ENCODE measurements at regions of chr7 and their contacts with region 1.

Region 1: GRCh38 chr7:140656548-140657515 is 15.9 kb upstream of the ADCK2 start:
- DNase-seq: peak in 1 of 2 donors; percentile 76
- H3K4me3 ChIP-seq: no peak overlapping the region
- CTCF ChIP-seq: no peak
- POLR2A ChIP-seq: no peak

Region 2: DNA sequence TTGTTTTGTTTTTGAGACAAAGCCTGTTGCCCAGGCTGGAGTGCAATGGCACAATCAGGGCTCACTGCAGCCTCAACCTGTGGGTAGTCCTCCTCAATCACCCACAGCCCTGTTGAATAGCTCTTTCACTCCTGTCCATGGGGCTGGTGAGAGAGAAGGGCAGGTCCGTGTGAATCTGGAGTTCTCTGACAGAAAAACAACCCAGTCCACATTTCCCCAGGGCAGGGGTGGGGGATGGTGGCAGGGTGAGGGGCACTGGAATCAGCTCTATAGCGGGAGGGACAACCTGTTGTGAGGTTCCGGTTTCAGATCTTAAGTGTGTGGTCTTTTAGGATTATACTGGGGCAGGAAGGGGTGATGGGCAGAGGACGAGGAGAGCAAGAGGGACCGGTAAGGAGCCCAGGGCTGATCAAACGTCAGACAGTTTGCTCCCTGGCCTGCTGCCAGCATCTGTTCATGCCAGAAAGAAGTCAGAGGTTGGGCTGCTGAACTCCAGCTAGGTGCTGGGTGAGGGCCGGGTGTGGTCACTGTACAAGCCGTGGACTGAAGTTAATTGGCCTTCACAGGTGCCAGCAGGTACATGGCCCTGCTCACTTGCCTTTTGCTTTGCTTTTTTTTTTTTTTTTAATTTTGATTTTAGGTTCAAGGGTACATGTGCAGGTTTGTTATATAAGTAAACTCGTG is 144.4 kb before region 1 on chr7:
- intact Hi-C with region 1: loop called (anchors 2 kb)
- DNase-seq: no peak
- H3K4me3 ChIP-seq: no peak overlapping the region
- CTCF ChIP-seq: no peak
- POLR2A ChIP-seq: no peak

Measured in lower leg skin (tissue), 4 donors.